ENCODE measurements at regions of chr5 and their contacts with region 1.

Region 1: GRCh38 chr5:112329419-112330090 is 89.5 kb downstream of the EPB41L4A start:
- DNase-seq: no peak
- ATAC-seq: no peak
- H3K4me3 ChIP-seq: no peak overlapping the region
- H3K27ac ChIP-seq: no peak overlapping the region
- H3K4me1 ChIP-seq: no peaks in the 10 kb centered on the region
- H3K27me3 ChIP-seq: no peaks in the 10 kb centered on the region
- CTCF ChIP-seq: no peak
- POLR2A ChIP-seq: no peak
- RAD21 ChIP-seq: no peak

Region 2: DNA sequence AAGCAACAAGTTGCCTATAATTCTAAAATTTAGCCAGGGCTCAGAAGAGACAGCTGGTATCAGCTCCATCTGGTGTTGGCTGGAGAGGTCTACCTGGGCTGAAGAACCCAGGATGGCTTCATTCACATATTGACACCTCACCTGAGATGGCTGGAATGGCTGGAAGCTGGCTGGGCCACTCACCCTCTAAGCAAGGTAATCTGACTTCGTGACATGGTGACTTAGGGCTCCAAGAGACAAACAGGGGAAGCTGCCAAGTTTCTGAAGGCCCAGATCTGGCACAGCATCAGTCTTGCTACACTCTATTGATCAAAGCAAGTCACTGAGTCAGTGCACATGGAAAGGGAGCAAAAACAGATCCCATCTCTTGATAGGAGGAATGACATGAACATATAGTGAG is 12.8 kb before region 1 on chr5:
- CTCF ChIA-PET with region 1: interaction called, 11 read pairs
- POLR2A ChIA-PET with region 1: no interaction called
- dilution Hi-C with region 1: no loop called
- in situ Hi-C with region 1: no loop called
- intact Hi-C with region 1: no loop called
- DNase-seq: no peak
- ATAC-seq: no peak
- H3K4me3 ChIP-seq: no peak overlapping the region
- H3K27ac ChIP-seq: no peak overlapping the region
- H3K4me1 ChIP-seq: no peaks in the 10 kb centered on the region
- H3K27me3 ChIP-seq: no peaks in the 10 kb centered on the region
- CTCF ChIP-seq: no peak
- POLR2A ChIP-seq: no peak
- RAD21 ChIP-seq: no peak

Region 3: DNA sequence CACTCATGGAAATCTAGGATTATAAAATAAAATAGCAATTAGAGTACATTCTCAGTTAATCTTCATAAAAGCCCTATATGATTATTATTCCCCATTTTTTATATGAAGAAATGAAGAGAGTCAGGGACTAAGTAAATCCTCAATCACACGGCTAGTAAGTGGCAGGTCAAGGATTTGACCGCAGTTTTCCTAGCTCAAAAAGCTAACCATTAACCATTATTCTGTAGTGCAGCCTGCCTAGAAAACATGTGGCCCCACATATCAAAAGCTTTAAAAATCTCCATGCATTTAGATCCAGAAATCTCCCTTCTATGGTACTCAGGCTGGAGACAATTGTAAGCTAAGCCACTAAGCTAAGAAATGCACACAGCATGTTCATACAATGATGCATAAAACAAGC is 68.1 kb after region 1 on chr5:
- CTCF ChIA-PET with region 1: no interaction called
- POLR2A ChIA-PET with region 1: no interaction called
- dilution Hi-C with region 1: no loop called
- in situ Hi-C with region 1: no loop called
- intact Hi-C with region 1: no loop called
- DNase-seq: no peak
- ATAC-seq: no peak
- H3K4me3 ChIP-seq: no peak overlapping the region
- H3K27ac ChIP-seq: no peak overlapping the region
- H3K4me1 ChIP-seq: no peaks in the 10 kb centered on the region
- H3K27me3 ChIP-seq: no peaks in the 10 kb centered on the region
- CTCF ChIP-seq: no peak
- POLR2A ChIP-seq: no peak
- RAD21 ChIP-seq: no peak